Psoas muscle (tissue), 8 donors: ENCODE measurements at regions of chr2 and their contacts with region 1.

Region 1: GRCh38 chr2:24613154-24613814 is 122.2 kb downstream of the NCOA1 start:
- DNase-seq: peak in 1 of 2 donors; percentile 49
- ATAC-seq: peak; percentile 67 to 77 (median 74)
- H3K4me3 ChIP-seq: no peak overlapping the region
- H3K27ac ChIP-seq: peak overlapping the region; percentile 79
- H3K4me1 ChIP-seq: peaks cover 56% of the 10 kb centered on the region
- H3K27me3 ChIP-seq: no peaks in the 10 kb centered on the region
- CTCF ChIP-seq: peak; percentile 24

Region 2: DNA sequence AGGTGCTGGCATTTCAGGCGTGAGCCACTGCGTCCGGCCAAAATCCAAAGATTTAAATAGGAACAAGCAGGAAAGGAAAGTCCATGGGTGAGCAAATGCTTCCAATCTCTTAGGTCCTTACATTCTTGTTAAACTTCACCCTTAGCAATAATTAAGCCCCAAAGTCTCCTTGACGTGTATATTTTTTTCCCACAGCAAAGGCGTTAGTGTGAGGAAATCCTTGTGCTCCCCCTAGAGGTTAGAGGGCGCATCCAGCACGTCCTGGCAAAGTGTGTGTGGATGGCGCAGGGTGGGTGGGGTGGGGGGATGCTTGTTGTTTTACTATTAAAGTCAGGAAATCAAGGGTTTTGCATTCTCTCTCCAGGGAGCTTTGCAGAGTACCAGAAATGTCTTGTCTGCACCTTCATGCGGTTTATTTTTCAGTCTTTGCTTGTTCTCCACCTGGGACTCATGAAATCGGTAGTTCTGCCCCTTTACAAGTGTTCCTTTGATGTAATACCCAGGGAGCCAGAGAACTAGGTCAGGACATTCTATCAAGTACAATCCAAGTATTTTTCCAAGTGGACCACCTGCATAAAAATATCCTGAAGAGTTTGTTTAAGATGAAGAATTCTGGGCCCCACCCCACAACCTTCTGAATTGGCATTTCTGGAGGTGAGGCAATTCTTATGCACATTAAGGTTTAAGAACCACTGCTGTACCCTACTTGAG is 230.8 kb before region 1 on chr2:
- intact Hi-C with region 1: no loop called
- DNase-seq: peak; percentile 45 to 67
- ATAC-seq: peak; percentile 81 to 96 (median 91)
- H3K4me3 ChIP-seq: no peak overlapping the region
- H3K27ac ChIP-seq: no peak overlapping the region
- H3K4me1 ChIP-seq: no peaks in the 10 kb centered on the region
- H3K27me3 ChIP-seq: no peaks in the 10 kb centered on the region
- CTCF ChIP-seq: peak; percentile 72

Region 3: DNA sequence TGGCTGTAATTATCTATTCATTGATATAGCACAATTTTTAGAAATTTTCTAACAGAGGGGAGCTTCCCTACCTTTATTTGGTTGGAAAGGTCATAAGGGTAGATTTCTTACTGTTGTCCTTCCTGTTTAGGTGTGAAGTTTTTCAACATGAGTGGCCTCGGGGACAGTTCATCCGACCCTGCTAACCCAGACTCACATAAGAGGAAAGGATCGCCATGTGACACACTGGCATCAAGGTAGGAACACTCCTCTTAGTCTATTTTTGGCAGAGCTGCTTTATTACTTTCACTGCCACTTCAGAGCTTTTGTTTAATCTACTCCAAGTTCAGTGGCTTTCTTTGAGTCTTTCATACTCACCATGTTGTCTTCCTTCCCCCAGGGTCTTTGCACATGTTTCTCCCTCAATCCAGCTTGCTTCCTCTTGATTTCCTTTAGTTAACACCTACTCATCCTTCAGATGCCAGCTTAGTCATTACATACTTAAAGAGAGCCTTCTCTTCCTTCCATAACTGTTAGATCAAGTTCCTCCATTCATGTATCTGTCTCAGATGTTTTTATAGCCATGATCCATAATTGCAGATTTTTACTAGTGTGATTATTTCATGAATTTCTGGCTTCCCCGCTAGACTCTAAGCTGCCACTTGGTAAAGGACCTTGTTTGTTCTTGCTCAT is 45.4 kb after region 1 on chr2:
- intact Hi-C with region 1: loop called in 1 of 2 experiments (anchors 1 kb)
- DNase-seq: peak; percentile 30 to 65
- ATAC-seq: peak; percentile 94 to 97 (median 96)
- H3K4me3 ChIP-seq: peak overlapping the region; percentile 4
- H3K27ac ChIP-seq: peak overlapping the region; percentile 73
- H3K4me1 ChIP-seq: peaks cover 46% of the 10 kb centered on the region
- H3K27me3 ChIP-seq: no peaks in the 10 kb centered on the region
- CTCF ChIP-seq: no peak

Region 4: DNA sequence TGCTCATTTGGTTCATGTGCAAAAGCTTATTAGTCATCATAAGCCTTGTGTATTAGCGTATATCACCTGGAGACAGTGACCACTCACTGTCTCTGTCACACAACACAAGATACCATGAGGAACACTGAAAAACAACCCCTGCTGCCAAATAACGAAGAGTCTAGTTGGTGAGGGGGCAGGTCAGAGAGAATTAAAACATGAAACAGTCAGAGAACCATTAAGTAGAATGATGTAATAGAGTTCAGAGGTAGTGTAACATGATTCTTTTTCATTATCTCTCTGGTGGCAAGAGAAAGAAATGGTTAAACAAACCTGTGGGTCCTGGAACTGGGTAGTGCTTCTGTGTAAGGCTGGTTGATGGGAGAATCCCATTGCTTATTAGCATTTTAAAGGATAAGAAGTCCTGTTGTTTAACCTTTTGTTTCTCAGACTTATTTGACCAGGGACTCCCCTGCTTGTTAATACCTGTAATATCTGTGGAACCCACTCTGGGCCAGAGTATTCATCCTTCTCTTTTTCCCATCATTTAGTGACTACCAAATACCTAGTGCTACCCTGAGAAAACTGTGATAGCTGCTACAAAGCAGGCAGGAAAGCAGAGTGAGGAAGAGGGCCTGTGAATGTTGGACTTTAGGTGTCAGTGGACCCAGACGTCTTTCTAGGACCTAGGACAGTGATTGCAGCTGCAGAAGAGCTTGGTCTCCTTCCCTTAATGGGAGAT is 141.9 kb after region 1 on chr2:
- intact Hi-C with region 1: no loop called
- DNase-seq: no peak
- ATAC-seq: no peak
- H3K4me3 ChIP-seq: no peak overlapping the region
- H3K27ac ChIP-seq: no peak overlapping the region
- H3K4me1 ChIP-seq: no peaks in the 10 kb centered on the region
- H3K27me3 ChIP-seq: no peaks in the 10 kb centered on the region
- CTCF ChIP-seq: no peak